CD14-positive monocyte (primary cell): ENCODE measurements at regions of chr7 and their contacts with region 1.

Region 1: GRCh38 chr7:100538654-100539435 is at the start of gene AGFG2:
- DNase-seq: peak; percentile 99 to 100 (median 99)
- H3K4me3 ChIP-seq: peak within 1 kb of the TSS; percentile 56 to 85 (median 57)
- H3K4me3 Mint-ChIP-seq: peak within 1 kb of the TSS; percentile 91 to 96
- H3K27ac ChIP-seq: peak within 1 kb of the TSS in 1 of 2 donors; percentile 58
- H3K27ac Mint-ChIP-seq: peak within 1 kb of the TSS in 6 of 7 donors; percentile 24 to 89 (median 60)
- H3K4me1 ChIP-seq: peaks cover 14 to 18% of the 10 kb centered on the region in 2 donors
- H3K4me1 Mint-ChIP-seq: peaks cover 13% of the 10 kb centered on the region
- H3K27me3 ChIP-seq: no peaks in the 10 kb centered on the region
- H3K27me3 Mint-ChIP-seq: peaks cover 0 to 5% (median 0%) of the 10 kb centered on the region in 3 donors
- CTCF ChIP-seq: no peak
- polyA plus RNA-seq, gene AGFG2: 1.3 to 1.8 (median 1.8) TPM

Region 2: DNA sequence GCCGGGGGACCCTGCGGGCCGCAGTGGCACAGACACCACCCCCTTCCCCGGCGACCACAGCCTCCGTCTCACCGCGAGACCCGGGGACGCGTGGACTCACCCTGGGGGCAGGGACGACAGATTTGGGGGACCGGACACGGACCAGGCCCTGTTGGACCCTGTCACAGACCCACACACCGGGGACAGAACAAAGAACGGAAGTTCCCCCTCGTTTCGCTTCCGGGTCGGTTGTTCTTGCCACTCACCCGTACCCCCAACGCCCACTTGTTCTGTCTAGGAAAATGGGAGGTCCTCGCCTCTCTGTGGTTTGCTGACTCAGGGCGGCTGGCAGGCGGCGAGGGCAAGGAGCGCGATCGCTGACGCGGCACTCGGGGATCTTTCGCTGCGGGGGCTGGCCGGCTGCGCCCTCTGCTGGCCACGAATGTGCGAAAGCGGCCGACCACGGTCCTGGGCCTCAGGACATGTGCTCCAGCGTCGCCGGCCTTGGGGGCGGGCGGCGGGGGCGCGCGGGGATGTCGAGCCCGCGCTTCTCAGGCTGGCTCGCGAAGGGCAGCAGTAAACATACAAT is 457.2 kb before region 1 on chr7 and contains the start of gene ZNF3:
- intact Hi-C with region 1: no loop called
- DNase-seq: peak; percentile 98 to 99 (median 99)
- H3K4me3 ChIP-seq: peak within 1 kb of the TSS; percentile 44 to 94 (median 81)
- H3K4me3 Mint-ChIP-seq: peak within 1 kb of the TSS; percentile 82 to 92
- H3K27ac ChIP-seq: peak within 1 kb of the TSS; percentile 69 to 86
- H3K27ac Mint-ChIP-seq: peak within 1 kb of the TSS; percentile 89 to 96 (median 93)
- H3K4me1 ChIP-seq: peaks cover 36 to 40% of the 10 kb centered on the region in 2 donors
- H3K4me1 Mint-ChIP-seq: peaks cover 37% of the 10 kb centered on the region
- H3K27me3 ChIP-seq: no peaks in the 10 kb centered on the region
- H3K27me3 Mint-ChIP-seq: peaks cover 8 to 15% (median 13%) of the 10 kb centered on the region in 3 donors
- CTCF ChIP-seq: peak; percentile 95
- polyA plus RNA-seq, gene ZNF3: 7.1 to 13.4 (median 8.9) TPM

Region 3: DNA sequence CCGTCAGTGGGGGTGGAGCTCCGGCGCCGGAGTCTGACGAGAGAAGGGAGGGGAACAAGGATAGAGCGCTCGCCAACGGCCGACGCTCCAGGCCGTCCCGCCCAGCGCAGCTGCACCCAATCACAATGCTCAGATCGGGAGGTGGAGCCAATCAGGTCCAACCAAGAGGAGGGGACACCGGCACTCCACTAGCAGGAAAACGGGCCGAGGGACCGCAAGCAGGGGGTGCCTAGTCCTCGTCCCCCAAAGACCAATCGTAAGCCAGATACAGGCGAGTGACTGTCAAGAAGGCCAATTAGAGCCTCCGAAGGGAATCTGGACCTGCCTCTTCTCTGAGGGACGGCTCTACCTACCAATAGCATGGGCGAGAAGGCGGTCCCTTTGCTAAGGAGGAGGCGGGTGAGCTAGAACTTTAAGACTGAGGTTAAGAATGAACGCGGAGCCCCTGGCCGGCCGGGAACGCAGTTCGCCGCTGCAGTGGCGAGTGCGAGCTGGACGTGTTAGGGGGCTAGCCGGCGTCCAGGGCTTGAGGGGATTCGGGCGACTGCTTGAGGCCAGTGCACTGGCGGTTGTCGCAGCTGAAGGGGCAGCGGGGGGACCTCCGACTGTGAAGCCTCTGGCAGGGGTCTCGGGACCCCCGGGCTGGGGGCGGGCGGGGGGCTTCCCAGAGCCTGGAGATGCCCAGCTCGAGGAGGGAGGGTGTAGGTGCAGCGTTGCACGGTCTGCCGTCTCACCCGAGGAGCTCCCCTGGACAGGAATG is 47.6 kb after region 1 on chr7 and contains the start of gene FBXO24:
- intact Hi-C with region 1: loop called in 1 of 2 experiments (anchors 5 kb)
- DNase-seq: peak; percentile 100
- H3K4me3 ChIP-seq: peak within 1 kb of the TSS; percentile 77 to 100 (median 93)
- H3K4me3 Mint-ChIP-seq: peak within 1 kb of the TSS; percentile 93 to 99
- H3K27ac ChIP-seq: peak within 1 kb of the TSS; percentile 84 to 88
- H3K27ac Mint-ChIP-seq: peak within 1 kb of the TSS; percentile 93 to 98 (median 98)
- H3K4me1 ChIP-seq: peaks cover 40 to 52% of the 10 kb centered on the region in 2 donors
- H3K4me1 Mint-ChIP-seq: peaks cover 48% of the 10 kb centered on the region
- H3K27me3 ChIP-seq: peaks cover 0 to 14% of the 10 kb centered on the region in 2 donors
- H3K27me3 Mint-ChIP-seq: peaks cover 11 to 23% (median 17%) of the 10 kb centered on the region in 3 donors
- CTCF ChIP-seq: no peak
- polyA plus RNA-seq, gene FBXO24: 0.42 to 1.2 (median 0.69) TPM